Naive thymus-derived CD4-positive, alpha-beta T cell (primary cell): ENCODE measurements at regions of chr19 and their contacts with region 1.

Region 1: DNA sequence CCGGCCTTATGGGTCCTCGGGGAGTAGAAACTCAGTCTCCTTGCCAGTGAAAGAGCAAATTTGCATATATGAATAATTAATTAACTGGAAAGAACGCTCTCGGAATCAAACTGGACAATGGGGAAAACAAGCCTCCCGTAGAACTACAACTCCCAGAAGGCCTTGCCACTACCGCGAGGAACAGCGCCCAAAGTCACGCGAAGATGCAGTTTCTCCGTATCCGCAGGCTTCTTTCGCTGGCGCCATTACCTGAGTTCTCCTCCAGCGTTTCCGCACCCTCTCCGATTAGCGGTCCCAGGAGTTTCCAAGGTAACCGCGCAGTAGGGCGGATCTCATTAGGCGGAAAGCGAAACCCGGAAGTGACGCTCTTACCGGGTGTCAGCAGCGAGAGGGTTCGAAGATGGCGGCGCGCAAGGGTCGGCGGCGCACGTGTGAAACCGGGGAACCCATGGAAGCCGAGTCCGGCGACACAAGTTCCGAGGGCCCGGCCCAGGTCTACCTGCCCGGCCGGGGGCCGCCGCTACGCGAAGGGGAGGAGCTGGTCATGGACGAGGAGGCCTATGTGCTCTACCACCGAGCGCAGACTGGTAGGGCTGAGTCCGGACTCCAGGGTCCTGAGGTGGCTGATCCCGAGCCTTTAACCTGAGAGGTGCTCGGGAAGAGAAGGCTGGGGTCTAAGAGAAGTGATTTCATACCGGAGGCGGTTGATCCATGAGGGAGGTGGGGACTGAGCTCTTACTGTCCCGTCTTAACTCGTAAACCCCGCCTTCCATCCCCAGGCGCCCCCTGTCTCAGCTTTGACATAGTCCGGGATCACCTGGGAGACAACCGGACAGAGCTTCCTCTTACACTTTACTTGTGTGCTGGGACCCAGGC is at the start of gene GRWD1:
- DNase-seq: peak; percentile 63 to 98 (median 93)
- ATAC-seq: peak; percentile 95
- H3K4me3 ChIP-seq: peak within 1 kb of the TSS; percentile 80
- H3K4me3 Mint-ChIP-seq: peak within 1 kb of the TSS; percentile 87 to 96 (median 93)
- H3K27ac ChIP-seq: peak within 1 kb of the TSS; percentile 83
- H3K27ac Mint-ChIP-seq: peak within 1 kb of the TSS; percentile 90 to 98 (median 95)
- H3K4me1 ChIP-seq: peaks cover 20 to 22% of the 10 kb centered on the region in 2 donors
- H3K4me1 Mint-ChIP-seq: peaks cover 19 to 44% (median 37%) of the 10 kb centered on the region in 7 donors
- H3K27me3 ChIP-seq: peaks cover 0 to 8% of the 10 kb centered on the region in 2 donors
- H3K27me3 Mint-ChIP-seq: peaks cover 12 to 33% (median 21%) of the 10 kb centered on the region in 5 donors
- total RNA-seq, gene GRWD1: 26.1 to 45.8 (median 36.3) TPM

Region 2: DNA sequence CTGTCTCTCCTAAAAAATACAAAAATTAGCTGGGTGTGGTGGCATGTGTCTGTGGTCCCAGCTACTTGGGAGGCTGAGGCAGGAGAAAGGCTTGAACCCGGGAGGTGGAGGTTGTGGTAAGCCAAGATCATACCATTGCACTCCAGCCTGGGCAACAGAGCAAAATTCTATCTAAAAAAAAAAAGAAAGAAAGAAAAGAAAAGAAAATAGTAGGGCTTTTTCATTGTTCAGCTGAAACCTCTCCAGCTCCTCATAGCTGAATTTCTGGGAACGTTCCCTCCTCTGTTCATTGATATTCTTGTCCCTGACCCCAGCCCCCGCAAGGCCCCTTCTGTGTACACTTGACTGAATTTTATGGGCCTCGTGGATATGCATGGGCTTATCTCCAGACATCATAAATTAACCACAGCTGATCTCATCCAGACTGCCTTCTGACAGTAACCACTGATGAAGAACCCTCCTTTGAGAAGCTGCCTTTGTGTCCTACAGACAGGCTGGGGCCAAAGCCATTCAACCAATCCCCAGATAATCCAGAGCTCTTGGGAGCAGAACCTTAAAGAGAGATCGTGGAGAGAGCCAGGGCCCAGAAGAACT is 451.5 kb before region 1 on chr19 and contains the start of gene ELSPBP1:
- CTCF ChIA-PET with region 1: no interaction called
- POLR2A ChIA-PET with region 1: no interaction called
- intact Hi-C with region 1: no loop called
- DNase-seq: no peak
- ATAC-seq: no peak
- H3K4me3 ChIP-seq: no peak within 1 kb of the TSS
- H3K4me3 Mint-ChIP-seq: no peak within 1 kb of the TSS
- H3K27ac ChIP-seq: no peak within 1 kb of the TSS
- H3K27ac Mint-ChIP-seq: no peak within 1 kb of the TSS
- H3K4me1 ChIP-seq: no peaks in the 10 kb centered on the region
- H3K4me1 Mint-ChIP-seq: peaks cover 0 to 3% (median 0%) of the 10 kb centered on the region in 7 donors
- H3K27me3 ChIP-seq: no peaks in the 10 kb centered on the region
- H3K27me3 Mint-ChIP-seq: peaks cover 14 to 50% (median 33%) of the 10 kb centered on the region in 5 donors
- total RNA-seq, gene ELSPBP1: not detected

Region 3: DNA sequence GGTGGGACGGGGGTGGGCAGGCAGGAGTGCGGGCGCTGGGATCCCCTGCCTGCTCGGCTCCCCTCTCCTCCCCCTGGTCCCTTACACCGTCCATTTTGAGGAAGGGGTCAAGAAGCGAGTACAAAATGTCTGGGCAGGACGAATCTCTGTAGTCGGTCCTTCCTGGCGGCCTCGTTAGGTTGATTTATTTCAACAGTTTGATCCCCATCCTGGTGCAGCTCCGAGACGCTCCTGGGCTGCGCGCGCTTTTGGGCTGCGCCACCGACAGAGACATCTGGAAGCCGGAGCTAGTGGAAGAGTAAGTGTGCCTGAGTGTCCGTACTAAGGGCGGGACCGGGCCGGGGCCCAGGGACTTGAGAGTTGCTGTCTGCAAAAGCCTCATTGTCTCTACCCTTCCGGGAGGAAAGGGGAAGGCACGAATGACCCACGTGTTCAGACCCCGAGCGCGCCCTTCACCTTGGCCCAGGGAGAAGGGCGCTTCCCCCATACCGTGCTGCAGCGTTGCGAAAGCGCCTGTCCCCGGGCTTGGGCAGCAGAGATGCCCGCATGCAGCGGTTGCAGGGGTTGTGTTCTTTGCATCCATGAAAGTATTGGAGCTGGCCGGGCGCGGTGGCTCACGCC is 174.2 kb before region 1 on chr19:
- CTCF ChIA-PET with region 1: no interaction called
- POLR2A ChIA-PET with region 1: no interaction called
- intact Hi-C with region 1: no loop called
- DNase-seq: peak in 4 of 9 donors; percentile 5 to 32 (median 9)
- ATAC-seq: peak; percentile 40
- H3K4me3 ChIP-seq: peak overlapping the region; percentile 55
- H3K4me3 Mint-ChIP-seq: peak overlapping the region; percentile 76 to 95 (median 88)
- H3K27ac ChIP-seq: no peak overlapping the region
- H3K27ac Mint-ChIP-seq: peak overlapping the region in 1 of 9 donors; percentile 33
- H3K4me1 ChIP-seq: peaks cover 0 to 5% of the 10 kb centered on the region in 2 donors
- H3K4me1 Mint-ChIP-seq: peaks cover 13 to 30% (median 20%) of the 10 kb centered on the region in 7 donors
- H3K27me3 ChIP-seq: no peaks in the 10 kb centered on the region
- H3K27me3 Mint-ChIP-seq: peaks cover 0 to 23% (median 11%) of the 10 kb centered on the region in 5 donors

Region 4: DNA sequence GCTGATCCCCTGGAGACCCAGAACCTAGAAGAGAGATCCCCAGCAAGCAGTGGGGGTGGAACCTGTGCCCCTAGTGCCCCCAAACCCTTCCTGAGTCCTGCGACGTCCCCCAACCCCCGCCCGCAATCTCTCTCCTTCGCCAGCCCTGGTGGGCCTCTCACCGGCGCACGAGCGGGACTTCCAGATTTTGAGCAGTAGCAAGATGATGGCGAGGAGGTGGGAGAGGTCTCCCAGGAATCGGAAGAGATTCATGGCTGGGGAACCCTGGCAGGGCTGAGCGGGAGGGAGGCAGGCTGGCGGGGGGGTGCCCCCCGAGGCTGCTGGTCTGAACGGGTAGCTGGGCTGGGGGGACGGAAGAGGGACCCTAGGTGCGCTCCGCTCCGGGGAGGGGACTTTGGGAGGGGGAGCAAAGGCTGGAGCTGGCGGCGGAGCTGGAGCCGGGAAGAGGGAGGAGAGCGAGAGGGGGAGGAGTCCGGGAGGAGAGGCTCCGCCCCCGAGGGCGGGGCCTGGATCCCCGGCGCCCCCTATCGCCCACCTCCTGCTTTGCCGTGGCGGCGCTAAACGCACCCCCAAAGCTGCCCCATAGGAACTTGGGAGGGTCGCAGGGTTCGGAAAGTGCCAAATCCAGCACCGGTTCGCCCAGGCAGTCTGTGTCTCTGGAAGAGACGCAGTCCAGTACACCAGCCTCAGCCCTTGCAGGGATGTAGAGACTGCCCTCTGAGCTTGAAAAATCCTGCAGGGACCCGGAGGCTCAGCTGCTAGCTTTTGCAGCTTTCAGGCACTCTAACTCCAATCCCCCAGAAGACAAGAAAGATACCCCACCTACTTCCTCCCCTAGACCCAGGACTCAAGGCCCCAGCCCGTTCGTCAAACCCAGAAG is 54.5 kb before region 1 on chr19 and contains the start of gene KDELR1:
- CTCF ChIA-PET with region 1: no interaction called
- POLR2A ChIA-PET with region 1: interaction called, 5 read pairs
- intact Hi-C with region 1: loop called (anchors 1 to 2 kb)
- DNase-seq: peak; percentile 55 to 89 (median 72)
- ATAC-seq: peak; percentile 92
- H3K4me3 ChIP-seq: peak within 1 kb of the TSS; percentile 96
- H3K4me3 Mint-ChIP-seq: peak within 1 kb of the TSS; percentile 84 to 95 (median 92)
- H3K27ac ChIP-seq: peak within 1 kb of the TSS; percentile 92
- H3K27ac Mint-ChIP-seq: peak within 1 kb of the TSS; percentile 78 to 97 (median 93)
- H3K4me1 ChIP-seq: peaks cover 15 to 32% of the 10 kb centered on the region in 2 donors
- H3K4me1 Mint-ChIP-seq: peaks cover 5 to 46% (median 36%) of the 10 kb centered on the region in 7 donors
- H3K27me3 ChIP-seq: peaks cover 9 to 21% of the 10 kb centered on the region in 2 donors
- H3K27me3 Mint-ChIP-seq: peaks cover 9 to 42% (median 21%) of the 10 kb centered on the region in 5 donors
- total RNA-seq, gene KDELR1: 42.7 to 73.9 (median 52.3) TPM

Region 5: GRCh38 chr19:48419158-48419920 is 26.5 kb before region 1 on chr19:
- CTCF ChIA-PET with region 1: no interaction called
- POLR2A ChIA-PET with region 1: no interaction called
- intact Hi-C with region 1: loop called (anchors 1 to 2 kb)
- DNase-seq: peak; percentile 44 to 77 (median 64)
- ATAC-seq: peak; percentile 79
- H3K4me3 ChIP-seq: peak overlapping the region; percentile 15
- H3K4me3 Mint-ChIP-seq: peak overlapping the region; percentile 60 to 90 (median 80)
- H3K27ac ChIP-seq: no peak overlapping the region
- H3K27ac Mint-ChIP-seq: peak overlapping the region in 6 of 9 donors; percentile 6 to 93 (median 74)
- H3K4me1 ChIP-seq: peaks cover 0 to 5% of the 10 kb centered on the region in 2 donors
- H3K4me1 Mint-ChIP-seq: peaks cover 12 to 30% (median 22%) of the 10 kb centered on the region in 7 donors
- H3K27me3 ChIP-seq: no peaks in the 10 kb centered on the region
- H3K27me3 Mint-ChIP-seq: peaks cover 0 to 22% (median 5%) of the 10 kb centered on the region in 5 donors

Region 6: GRCh38 chr19:48618916-48619691 is 173.3 kb after region 1 on chr19 and contains the starts of genes RPL18 and SPHK2:
- CTCF ChIA-PET with region 1: no interaction called
- POLR2A ChIA-PET with region 1: interaction called, 3 read pairs
- intact Hi-C with region 1: loop called (anchors 1 kb)
- DNase-seq: peak; percentile 89 to 97 (median 95)
- ATAC-seq: peak; percentile 89
- H3K4me3 ChIP-seq: peak within 1 kb of the TSS; percentile 96
- H3K4me3 Mint-ChIP-seq: peak within 1 kb of the TSS; percentile 88 to 99 (median 96)
- H3K27ac ChIP-seq: peak within 1 kb of the TSS; percentile 95
- H3K27ac Mint-ChIP-seq: peak within 1 kb of the TSS; percentile 96 to 99 (median 98)
- H3K4me1 ChIP-seq: peaks cover 26 to 45% of the 10 kb centered on the region in 2 donors
- H3K4me1 Mint-ChIP-seq: peaks cover 40 to 64% (median 54%) of the 10 kb centered on the region in 7 donors
- H3K27me3 ChIP-seq: no peaks in the 10 kb centered on the region
- H3K27me3 Mint-ChIP-seq: no peaks in the 10 kb centered on the region
- total RNA-seq, gene RPL18: 1,570 to 2,826 (median 2,745) TPM
- total RNA-seq, gene SPHK2: 20.1 to 34.7 (median 30.5) TPM

Region 7: DNA sequence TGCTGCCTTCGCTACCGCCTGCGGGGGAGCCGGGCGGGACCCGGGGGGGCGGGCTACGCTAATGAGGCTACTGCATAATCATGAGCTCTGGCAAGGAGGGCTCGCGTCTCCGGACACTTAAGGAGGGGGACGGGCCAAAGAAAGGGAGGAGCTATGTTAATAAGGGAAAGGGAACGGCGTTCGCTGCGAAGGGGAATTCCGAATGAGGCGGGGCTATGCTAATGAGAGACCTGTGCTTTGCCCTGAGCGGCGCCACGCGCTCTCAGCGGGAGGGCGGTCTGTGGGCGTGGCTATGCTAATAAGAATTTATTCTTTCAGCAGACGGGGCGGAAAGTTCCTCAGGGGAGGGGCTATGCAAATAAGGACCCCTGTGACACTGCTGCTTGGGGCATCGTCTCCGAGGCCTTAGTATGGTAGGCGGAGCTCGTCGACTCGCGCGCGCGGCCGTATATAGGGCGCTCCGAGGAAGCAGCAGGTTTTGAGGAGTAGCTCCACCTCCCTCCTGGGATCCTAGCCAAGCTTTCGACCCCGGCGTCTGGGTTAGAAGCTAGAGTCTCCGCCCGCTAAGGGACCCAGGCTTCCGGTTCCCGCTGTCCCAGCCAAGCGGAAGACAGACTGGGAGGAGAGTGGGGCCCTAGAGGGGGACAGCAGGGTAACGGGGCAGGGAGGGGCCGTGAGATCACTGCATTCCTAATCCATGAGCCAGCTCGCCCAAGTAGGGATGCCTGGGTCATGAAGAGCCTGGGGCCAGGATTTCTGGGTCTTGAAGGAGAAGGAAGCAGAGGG is 1194.5 kb after region 1 on chr19 and contains the start of gene RRAS:
- CTCF ChIA-PET with region 1: no interaction called
- POLR2A ChIA-PET with region 1: no interaction called
- intact Hi-C with region 1: no loop called
- DNase-seq: peak; percentile 91 to 100 (median 99)
- ATAC-seq: peak; percentile 78
- H3K4me3 ChIP-seq: peak within 1 kb of the TSS; percentile 64
- H3K4me3 Mint-ChIP-seq: peak within 1 kb of the TSS; percentile 86 to 98 (median 93)
- H3K27ac ChIP-seq: peak within 1 kb of the TSS; percentile 95
- H3K27ac Mint-ChIP-seq: peak within 1 kb of the TSS; percentile 93 to 99 (median 99)
- H3K4me1 ChIP-seq: peaks cover 27 to 40% of the 10 kb centered on the region in 2 donors
- H3K4me1 Mint-ChIP-seq: peaks cover 57 to 67% (median 63%) of the 10 kb centered on the region in 7 donors
- H3K27me3 ChIP-seq: no peaks in the 10 kb centered on the region
- H3K27me3 Mint-ChIP-seq: peaks cover 0 to 6% (median 0%) of the 10 kb centered on the region in 5 donors
- total RNA-seq, gene RRAS: 11.0 to 18.6 (median 13.8) TPM